Vagina (tissue), 2 donors: ENCODE measurements at regions of chr16 and their contacts with region 1.

Region 1: GRCh38 chr16:85321509-85322271 is 209.4 kb upstream of the CIBAR2 start:
- DNase-seq: peak in 1 of 2 donors; percentile 96
- H3K4me3 ChIP-seq: peak overlapping the region in 1 of 2 donors; percentile 19
- H3K27ac ChIP-seq: peak overlapping the region; percentile 78
- H3K4me1 ChIP-seq: peaks cover 27% of the 10 kb centered on the region
- H3K27me3 ChIP-seq: no peaks in the 10 kb centered on the region
- CTCF ChIP-seq: no peak
- POLR2A ChIP-seq: no peak

Region 2: DNA sequence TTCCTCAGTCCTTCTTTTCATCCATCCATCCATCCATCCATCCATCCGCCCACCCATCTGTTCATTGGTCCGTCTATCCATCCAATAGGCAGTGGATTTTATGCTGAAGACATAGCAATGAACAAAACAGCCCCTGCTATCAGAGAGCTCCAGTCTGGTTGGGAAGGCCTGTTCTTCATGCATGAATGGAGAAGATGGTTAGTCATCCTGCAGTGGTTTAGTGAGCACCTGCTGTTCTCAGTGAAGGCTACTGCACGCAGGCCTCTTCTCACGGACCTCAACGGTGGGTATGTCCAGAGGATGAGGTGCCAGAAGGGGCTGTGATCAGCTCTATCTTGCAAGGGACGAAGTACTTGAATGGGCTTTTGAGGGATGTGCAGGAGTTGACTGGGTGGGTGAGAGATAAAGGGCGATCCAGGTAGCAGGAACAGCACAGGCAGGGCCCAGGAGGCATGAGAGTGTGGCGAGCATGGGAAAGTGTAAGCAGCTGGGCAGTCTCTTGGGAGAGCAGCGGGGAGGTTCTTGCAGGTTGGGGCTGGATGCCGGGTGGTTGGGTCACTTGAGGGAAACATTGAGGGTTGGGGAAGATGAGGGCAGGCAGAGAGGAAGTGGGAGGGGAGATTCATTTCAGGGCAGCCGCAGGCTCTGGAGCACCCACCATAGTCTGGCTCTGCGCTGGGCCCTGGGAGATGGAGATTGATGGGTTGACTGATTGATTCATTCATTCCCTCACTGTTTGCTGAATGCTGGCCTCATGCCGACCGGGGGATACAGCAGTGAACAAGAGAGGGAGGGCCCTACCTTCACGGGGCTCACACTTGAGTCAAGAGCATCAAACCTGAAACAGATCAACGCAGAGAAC is 94.4 kb before region 1 on chr16:
- intact Hi-C with region 1: no loop called
- DNase-seq: no peak
- H3K4me3 ChIP-seq: no peak overlapping the region
- H3K27ac ChIP-seq: no peak overlapping the region
- H3K4me1 ChIP-seq: peaks cover 21% of the 10 kb centered on the region
- H3K27me3 ChIP-seq: no peaks in the 10 kb centered on the region
- CTCF ChIP-seq: no peak
- POLR2A ChIP-seq: no peak

Region 3: DNA sequence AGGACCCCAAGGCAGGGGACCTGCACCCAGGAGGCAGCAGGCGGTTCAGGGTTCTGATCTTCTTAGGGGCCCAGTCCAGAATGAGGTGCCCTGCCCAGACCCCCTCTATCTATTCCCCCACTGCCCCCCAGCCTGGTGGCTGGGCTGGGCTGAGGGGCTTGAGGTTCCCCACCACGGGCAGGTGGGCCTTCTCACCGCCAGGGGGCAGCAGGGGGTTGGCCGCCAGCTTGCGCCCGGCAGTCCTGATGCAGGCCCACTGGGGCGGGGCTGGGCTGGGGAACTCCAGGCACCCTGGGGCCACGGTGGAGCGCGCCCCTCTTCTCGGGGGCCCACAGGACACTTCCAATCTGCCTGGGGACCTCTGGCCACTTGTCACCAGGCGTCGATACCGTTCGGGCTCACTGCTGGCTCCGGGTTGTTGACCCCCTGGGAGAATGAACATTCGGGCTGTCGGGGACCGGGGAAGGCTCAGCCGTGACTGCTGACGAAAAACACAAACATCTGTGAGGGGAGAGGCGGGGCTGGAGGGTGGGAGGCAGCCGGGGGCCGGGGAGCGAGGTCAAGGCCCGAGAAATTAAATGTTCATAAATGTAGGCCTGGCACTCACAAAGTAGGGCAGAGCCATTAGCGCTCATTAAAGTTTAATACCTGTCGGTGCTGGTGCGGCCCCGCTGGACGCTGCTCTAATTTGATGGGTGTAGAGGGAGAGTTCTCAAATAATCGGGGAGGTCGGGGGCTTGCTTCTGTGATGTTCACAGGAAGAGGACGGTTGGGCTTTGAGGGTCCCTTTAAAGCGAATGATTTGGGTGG is 72.2 kb after region 1 on chr16:
- intact Hi-C with region 1: loop called (anchors 5 kb)
- DNase-seq: no peak
- H3K4me3 ChIP-seq: no peak overlapping the region
- H3K27ac ChIP-seq: peak overlapping the region; percentile 45
- H3K4me1 ChIP-seq: peaks cover 58% of the 10 kb centered on the region
- H3K27me3 ChIP-seq: no peaks in the 10 kb centered on the region
- CTCF ChIP-seq: peak; percentile 42 to 85 (median 64)
- POLR2A ChIP-seq: no peak